ENCODE measurements at regions of chr18 and their contacts with region 1.

Region 1: GRCh38 chr18:6482198-6482977 is 67.7 kb upstream of the L3MBTL4 start:
- DNase-seq: peak; percentile 83
- ATAC-seq: peak; percentile 99

Region 2: DNA sequence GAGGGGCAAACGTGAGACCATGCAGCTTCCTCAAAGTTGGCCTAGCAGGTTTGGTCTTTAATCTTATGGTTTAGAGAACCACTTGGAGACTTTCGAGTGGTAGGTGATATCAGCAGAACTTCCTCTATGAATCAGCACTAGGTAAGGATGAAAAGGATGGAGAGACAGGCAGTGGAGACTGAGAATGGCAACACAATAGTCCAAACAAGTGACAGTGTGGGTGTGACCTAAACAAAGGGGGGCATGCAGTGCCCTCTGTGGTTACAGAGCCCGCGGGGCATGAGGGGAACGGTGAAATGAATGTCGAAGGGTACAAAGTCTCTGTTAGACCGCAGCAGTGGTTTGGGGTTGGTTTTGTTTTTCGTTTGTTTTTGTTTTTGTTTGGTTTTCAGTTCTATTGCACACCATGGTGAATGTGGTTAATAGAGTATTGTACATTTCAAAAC is 211.6 kb before region 1 on chr18:
- intact Hi-C with region 1: no loop called
- DNase-seq: no peak
- ATAC-seq: no peak

Region 3: DNA sequence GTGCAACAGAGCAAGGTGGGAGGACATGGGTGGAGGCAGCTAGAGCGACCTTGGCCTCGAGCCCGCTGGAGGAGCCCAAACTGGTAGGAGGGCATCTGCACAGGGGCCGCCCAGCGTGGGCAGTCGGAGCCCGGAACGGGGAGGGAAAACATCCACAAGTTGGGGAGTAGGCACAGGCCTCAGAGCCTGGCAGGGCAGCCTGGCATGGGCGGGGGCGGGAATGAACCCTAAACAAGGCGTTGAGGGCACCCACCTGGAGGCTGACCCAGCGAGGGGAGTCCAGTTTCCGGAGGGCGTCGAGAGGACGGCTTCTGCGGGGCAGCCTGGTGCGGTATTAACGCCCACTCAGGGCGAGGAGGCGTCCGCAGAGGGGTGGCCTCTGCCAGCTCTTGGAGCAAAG is 197.6 kb before region 1 on chr18:
- intact Hi-C with region 1: no loop called
- DNase-seq: no peak
- ATAC-seq: no peak

Region 4: GRCh38 chr18:6543330-6543908 is 61.0 kb after region 1 on chr18:
- intact Hi-C with region 1: loop called (anchors 10 kb)
- DNase-seq: no peak
- ATAC-seq: no peak

Region 5: GRCh38 chr18:6661692-6662415 is 179.5 kb after region 1 on chr18:
- intact Hi-C with region 1: no loop called
- DNase-seq: no peak
- ATAC-seq: no peak

Region 6: GRCh38 chr18:6885992-6886796 is 403.8 kb after region 1 on chr18:
- intact Hi-C with region 1: no loop called
- DNase-seq: no peak
- ATAC-seq: peak; percentile 71

Measured in Right ventricle myocardium inferior (tissue), 1 donor.